T-cell (primary cell): ENCODE measurements at regions of chr13 and their contacts with region 1.

Region 1: GRCh38 chr13:75739244-75739868 is 103.2 kb downstream of the LMO7 start:
- DNase-seq: no peak
- ATAC-seq: no peak
- H3K4me3 ChIP-seq: no peak overlapping the region
- H3K4me3 Mint-ChIP-seq: no peak overlapping the region
- H3K27ac ChIP-seq: no peak overlapping the region
- H3K27ac Mint-ChIP-seq: no peak overlapping the region
- H3K4me1 ChIP-seq: no peaks in the 10 kb centered on the region
- H3K4me1 Mint-ChIP-seq: peaks cover 0 to 7% (median 2%) of the 10 kb centered on the region in 3 donors
- H3K27me3 ChIP-seq: no peaks in the 10 kb centered on the region
- H3K27me3 Mint-ChIP-seq: no peaks in the 10 kb centered on the region

Region 2: DNA sequence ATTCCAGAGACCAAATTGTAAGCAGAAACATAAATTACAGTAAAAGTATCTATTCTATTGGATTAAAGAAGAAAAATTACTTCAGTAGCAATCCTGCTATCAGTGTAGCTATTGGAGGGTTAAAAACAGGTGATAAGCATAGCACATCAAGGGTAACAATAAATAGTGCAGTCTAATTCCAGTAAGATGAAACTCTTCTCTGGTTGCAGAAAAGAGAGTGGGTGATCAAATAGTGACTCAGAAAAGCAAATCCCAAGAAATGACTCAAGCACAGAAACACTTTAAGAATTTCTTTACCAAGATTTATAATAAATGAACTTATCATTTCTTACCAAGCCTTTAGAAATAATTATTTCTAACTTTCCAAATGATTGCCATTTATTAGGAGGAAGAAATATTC is 32.5 kb after region 1 on chr13:
- CTCF ChIA-PET with region 1: no interaction called
- POLR2A ChIA-PET with region 1: no interaction called
- DNase-seq: no peak
- ATAC-seq: no peak
- H3K4me3 ChIP-seq: no peak overlapping the region
- H3K4me3 Mint-ChIP-seq: no peak overlapping the region
- H3K27ac ChIP-seq: no peak overlapping the region
- H3K27ac Mint-ChIP-seq: no peak overlapping the region
- H3K4me1 ChIP-seq: peaks cover 0 to 2% of the 10 kb centered on the region in 2 experiments
- H3K4me1 Mint-ChIP-seq: peaks cover 10 to 14% (median 12%) of the 10 kb centered on the region in 3 donors
- H3K27me3 ChIP-seq: no peaks in the 10 kb centered on the region
- H3K27me3 Mint-ChIP-seq: no peaks in the 10 kb centered on the region

Region 3: GRCh38 chr13:76440568-76440967 is 701.2 kb after region 1 on chr13:
- CTCF ChIA-PET with region 1: no interaction called
- POLR2A ChIA-PET with region 1: interaction called in 1 of 2 experiments, 15 read pairs
- DNase-seq: no peak
- ATAC-seq: no peak
- H3K4me3 ChIP-seq: no peak overlapping the region
- H3K4me3 Mint-ChIP-seq: no peak overlapping the region
- H3K27ac ChIP-seq: no peak overlapping the region
- H3K27ac Mint-ChIP-seq: no peak overlapping the region
- H3K4me1 ChIP-seq: no peaks in the 10 kb centered on the region
- H3K4me1 Mint-ChIP-seq: no peaks in the 10 kb centered on the region
- H3K27me3 ChIP-seq: no peaks in the 10 kb centered on the region
- H3K27me3 Mint-ChIP-seq: peaks cover 0 to 7% of the 10 kb centered on the region in 2 donors